HepG2 (cell line): ENCODE measurements at regions of chr15 and their contacts with region 1.

Region 1: GRCh38 chr15:78540141-78540928 is at the start of gene PSMA4:
- DNase-seq: peak; percentile 73
- ATAC-seq: peak; percentile 92
- H3K4me3 ChIP-seq: peak within 1 kb of the TSS; percentile 83 to 88 (median 87)
- H3K27ac ChIP-seq: peak within 1 kb of the TSS; percentile 94
- H3K4me1 ChIP-seq: peaks cover 25% of the 10 kb centered on the region
- H3K27me3 ChIP-seq: no peaks in the 10 kb centered on the region; a peak in 1 of 5 replicates
- CTCF ChIP-seq: peak; percentile 31; the same call in 1 of the 2 replicates
- EP300 ChIP-seq: no peak; a peak in 1 of 4 replicates
- POLR2A ChIP-seq: peak; percentile 78 to 94
- RAD21 ChIP-seq: 0 out of 2 replicates have a peak, but pooled peaks have one; percentile 23
- total RNA-seq, gene PSMA4: 404 and 667 TPM in 2 replicates

Region 2: GRCh38 chr15:78506971-78507830 is 33.1 kb before region 1 on chr15 and contains the start of gene HYKK:
- CTCF ChIA-PET with region 1: no interaction called
- POLR2A ChIA-PET with region 1: interaction called, 17 read pairs
- in situ Hi-C with region 1: no loop called
- intact Hi-C with region 1: loop called (anchors 5 kb)
- DNase-seq: peak; percentile 98
- ATAC-seq: peak; percentile 97
- H3K4me3 ChIP-seq: peak within 1 kb of the TSS; percentile 69 to 84 (median 83)
- H3K27ac ChIP-seq: peak within 1 kb of the TSS; percentile 55
- H3K4me1 ChIP-seq: peaks cover 29% of the 10 kb centered on the region
- H3K27me3 ChIP-seq: no peaks in the 10 kb centered on the region; a peak in 1 of 5 replicates
- CTCF ChIP-seq: peak; percentile 34; the same call in 1 of the 2 replicates
- EP300 ChIP-seq: no peak
- POLR2A ChIP-seq: peak; percentile 49 to 82
- RAD21 ChIP-seq: 0 out of 2 replicates have a peak, but pooled peaks have one; percentile 17
- total RNA-seq, gene HYKK: 5.4 and 6.5 TPM in 2 replicates

Region 3: GRCh38 chr15:78565097-78565951 is 25.0 kb after region 1 on chr15 and contains the start of gene CHRNA5:
- CTCF ChIA-PET with region 1: no interaction called
- POLR2A ChIA-PET with region 1: interaction called, 40 read pairs
- in situ Hi-C with region 1: no loop called
- intact Hi-C with region 1: loop called (anchors 1 kb)
- DNase-seq: peak; percentile 75
- ATAC-seq: peak; percentile 91
- H3K4me3 ChIP-seq: peak within 1 kb of the TSS; percentile 61 to 80 (median 73)
- H3K27ac ChIP-seq: no peak within 1 kb of the TSS
- H3K4me1 ChIP-seq: peaks cover 18% of the 10 kb centered on the region
- H3K27me3 ChIP-seq: no peaks in the 10 kb centered on the region
- CTCF ChIP-seq: no peak
- EP300 ChIP-seq: no peak
- POLR2A ChIP-seq: peak; percentile 75 to 79
- RAD21 ChIP-seq: no peak
- total RNA-seq, gene CHRNA5: 5.1 and 10.5 TPM in 2 replicates

Region 4: DNA sequence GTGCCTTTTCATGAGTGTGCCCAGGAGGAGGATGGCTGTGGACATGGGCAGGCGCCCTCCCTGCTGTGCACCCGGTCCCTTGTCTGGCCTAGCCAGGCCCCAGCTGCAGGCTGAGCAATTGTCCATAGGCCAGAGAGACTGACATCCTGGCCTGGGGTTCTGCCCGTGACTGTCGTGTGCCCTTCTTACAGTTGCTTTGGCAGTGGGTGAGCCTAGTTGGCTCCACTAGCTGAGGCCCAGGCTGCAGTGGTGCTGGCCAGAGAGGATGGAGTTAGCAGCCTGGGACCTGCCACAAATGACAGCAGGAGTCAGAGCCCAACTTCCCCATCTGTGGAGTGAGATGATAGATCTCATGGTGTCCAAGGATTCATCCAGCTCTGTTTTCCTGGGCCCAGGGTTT is 109.7 kb after region 1 on chr15:
- CTCF ChIA-PET with region 1: no interaction called
- POLR2A ChIA-PET with region 1: no interaction called
- in situ Hi-C with region 1: no loop called
- intact Hi-C with region 1: no loop called
- DNase-seq: no peak
- ATAC-seq: no peak
- H3K4me3 ChIP-seq: no peak overlapping the region
- H3K27ac ChIP-seq: no peak overlapping the region
- H3K4me1 ChIP-seq: no peaks in the 10 kb centered on the region
- H3K27me3 ChIP-seq: peaks cover 3 to 11% of the 10 kb centered on the region in 2 experiments; a peak in 2 of 5 replicates
- CTCF ChIP-seq: no peak
- EP300 ChIP-seq: no peak
- POLR2A ChIP-seq: no peak
- RAD21 ChIP-seq: no peak

Region 5: GRCh38 chr15:78695854-78696253 is 155.5 kb after region 1 on chr15:
- CTCF ChIA-PET with region 1: no interaction called
- POLR2A ChIA-PET with region 1: no interaction called
- in situ Hi-C with region 1: no loop called
- intact Hi-C with region 1: no loop called
- DNase-seq: no peak
- ATAC-seq: no peak; the same call in 2 of the 3 replicates
- H3K4me3 ChIP-seq: no peak overlapping the region
- H3K27ac ChIP-seq: no peak overlapping the region
- H3K4me1 ChIP-seq: no peaks in the 10 kb centered on the region
- H3K27me3 ChIP-seq: 0 out of 5 replicates have a peak, but pooled peaks cover 0 to 3% of the 10 kb centered on the region in 2 experiments
- CTCF ChIP-seq: no peak; the same call in 1 of the 2 replicates
- EP300 ChIP-seq: no peak
- POLR2A ChIP-seq: no peak
- RAD21 ChIP-seq: no peak